Left cardiac atrium (tissue), 4 donors: ENCODE measurements at regions of chr7 and their contacts with region 1.

Region 1: DNA sequence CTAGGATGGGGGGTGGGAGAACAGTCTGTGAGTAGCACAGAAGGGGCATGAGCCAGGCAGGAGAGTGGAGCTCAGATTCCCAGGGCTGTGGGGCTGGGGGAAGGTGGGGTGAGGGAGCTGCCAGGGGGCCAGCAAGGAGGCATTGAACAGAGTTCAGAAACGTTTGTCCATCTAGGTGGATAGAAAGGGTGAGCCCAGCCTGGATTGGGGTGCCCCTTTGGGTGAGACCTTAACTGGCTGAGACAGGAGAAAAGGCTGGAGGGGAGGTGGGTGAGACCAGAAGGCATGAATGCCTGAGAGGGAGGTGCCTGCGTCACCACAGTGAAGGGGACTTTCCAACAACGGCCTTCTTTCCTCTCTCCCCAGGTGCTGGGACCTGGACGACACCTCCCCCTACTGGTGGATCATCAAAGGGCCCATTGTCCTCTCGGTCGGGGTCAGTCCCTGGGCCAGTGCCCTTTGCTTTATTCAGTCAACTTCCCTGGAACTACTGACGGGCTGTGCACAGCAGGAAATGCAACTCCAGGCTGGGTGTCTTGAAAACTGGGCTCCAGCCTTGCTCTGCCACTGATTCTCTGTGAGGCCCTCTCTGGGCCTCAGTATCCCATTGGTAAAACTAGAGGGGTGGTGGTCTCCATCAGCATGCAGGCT is 11.0 kb downstream of the GHRHR start:
- DNase-seq: peak; percentile 62
- ATAC-seq: peak; percentile 83

Region 2: DNA sequence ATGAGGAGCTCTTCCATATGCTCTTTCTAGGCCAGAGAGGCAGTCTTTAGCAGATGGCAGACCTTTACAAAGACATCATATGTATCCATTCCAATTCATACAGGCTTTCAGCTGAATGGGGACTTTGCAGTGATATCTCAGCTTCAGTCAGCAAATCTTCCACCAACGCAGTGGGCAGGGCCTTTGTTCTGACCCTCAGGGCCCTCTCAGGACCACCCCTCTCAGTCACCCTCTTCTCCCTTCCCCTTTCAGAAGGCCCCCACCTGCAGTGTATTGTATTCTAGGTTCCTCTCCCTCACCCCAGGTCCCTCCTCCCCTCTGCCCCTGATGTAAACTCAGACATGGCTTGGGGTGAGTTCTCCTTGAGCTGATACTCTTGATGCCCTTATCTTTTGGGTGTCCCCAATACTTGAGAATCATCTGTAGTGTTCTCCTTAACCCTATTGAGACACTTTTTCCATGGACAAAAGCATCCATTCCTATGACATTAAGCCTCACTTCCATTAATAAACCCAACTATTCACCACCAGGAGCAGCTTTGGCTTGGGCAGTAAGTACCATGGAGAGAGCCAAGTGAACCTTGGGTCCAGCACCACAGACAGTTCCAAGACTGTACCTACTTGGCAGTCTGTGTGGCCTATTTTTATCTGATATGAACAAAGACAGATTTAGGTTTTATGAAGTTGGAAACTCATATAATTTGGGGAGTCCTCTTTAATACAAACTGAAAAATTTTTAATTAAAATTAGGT is 140.0 kb after region 1 on chr7:
- intact Hi-C with region 1: loop called in 1 of 2 experiments (anchors 5 kb)
- DNase-seq: no peak
- ATAC-seq: peak in 1 of 2 donors; percentile 43